ENCODE measurements at regions of chr11 and their contacts with region 1.

Region 1: DNA sequence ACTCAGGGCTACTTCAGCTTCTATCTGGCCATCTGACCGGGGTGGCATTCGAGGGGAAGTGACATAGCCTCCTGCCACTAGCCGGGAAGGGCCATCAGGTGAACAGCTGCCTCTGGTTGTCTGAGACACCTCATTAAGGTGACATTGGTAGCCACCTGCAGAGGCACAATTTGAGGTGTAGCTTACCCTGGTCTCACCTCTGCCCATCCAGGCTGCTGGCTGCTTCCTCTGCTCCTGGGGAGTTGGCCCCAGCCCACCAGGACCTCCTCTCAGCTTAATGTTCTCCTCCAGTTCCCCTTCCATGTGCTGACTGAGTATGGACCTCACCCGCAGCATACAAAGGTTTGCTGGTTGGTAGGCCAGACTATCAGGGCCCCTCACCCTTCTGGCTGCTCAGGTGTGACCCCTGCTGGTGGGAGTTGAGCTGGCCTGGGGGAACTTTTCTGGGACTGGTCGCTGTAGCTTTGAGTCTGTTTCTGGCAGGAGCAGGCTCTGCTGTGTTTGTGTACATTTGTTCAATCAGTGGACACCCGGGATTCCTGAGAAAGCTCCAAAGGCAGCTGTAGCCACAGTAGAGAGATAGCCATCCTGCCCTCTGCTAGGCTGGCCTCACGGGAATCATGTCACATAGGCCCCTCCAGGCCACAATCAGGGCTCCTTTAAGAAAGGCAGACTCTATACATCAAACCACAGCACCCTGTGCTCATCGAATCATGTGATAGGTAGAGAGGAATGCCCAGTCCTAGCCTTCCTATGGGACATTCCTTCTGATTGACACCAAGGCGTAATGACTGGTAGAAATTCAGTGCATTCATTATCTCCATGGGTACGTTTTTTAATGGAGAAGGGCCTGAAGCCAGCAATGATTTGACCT is 295.1 kb upstream of the PLET1 start:
- DNase-seq: peak; percentile 68 to 84
- H3K4me3 ChIP-seq: no peak overlapping the region
- H3K4me3 Mint-ChIP-seq: no peak overlapping the region
- H3K27ac Mint-ChIP-seq: no peak overlapping the region
- H3K4me1 ChIP-seq: no peaks in the 10 kb centered on the region
- H3K4me1 Mint-ChIP-seq: no peaks in the 10 kb centered on the region
- H3K27me3 ChIP-seq: no peaks in the 10 kb centered on the region
- H3K27me3 Mint-ChIP-seq: peaks cover 21% of the 10 kb centered on the region
- CTCF ChIP-seq: peak; percentile 86 to 97

Region 2: GRCh38 chr11:111918390-111919258 is 637.1 kb before region 1 on chr11 and contains the start of gene C11orf52:
- CTCF ChIA-PET with region 1: no interaction called
- POLR2A ChIA-PET with region 1: no interaction called
- intact Hi-C with region 1: no loop called
- DNase-seq: peak; percentile 92 to 94
- H3K4me3 ChIP-seq: peak within 1 kb of the TSS; percentile 49
- H3K4me3 Mint-ChIP-seq: peak within 1 kb of the TSS; percentile 79
- H3K27ac Mint-ChIP-seq: peak within 1 kb of the TSS; percentile 94
- H3K4me1 ChIP-seq: peaks cover 12% of the 10 kb centered on the region
- H3K4me1 Mint-ChIP-seq: peaks cover 21% of the 10 kb centered on the region
- H3K27me3 ChIP-seq: no peaks in the 10 kb centered on the region
- H3K27me3 Mint-ChIP-seq: no peaks in the 10 kb centered on the region
- CTCF ChIP-seq: peak; percentile 42 to 48
- total RNA-seq, gene C11orf52: 14.4 and 14.8 TPM in 2 replicates

Region 3: DNA sequence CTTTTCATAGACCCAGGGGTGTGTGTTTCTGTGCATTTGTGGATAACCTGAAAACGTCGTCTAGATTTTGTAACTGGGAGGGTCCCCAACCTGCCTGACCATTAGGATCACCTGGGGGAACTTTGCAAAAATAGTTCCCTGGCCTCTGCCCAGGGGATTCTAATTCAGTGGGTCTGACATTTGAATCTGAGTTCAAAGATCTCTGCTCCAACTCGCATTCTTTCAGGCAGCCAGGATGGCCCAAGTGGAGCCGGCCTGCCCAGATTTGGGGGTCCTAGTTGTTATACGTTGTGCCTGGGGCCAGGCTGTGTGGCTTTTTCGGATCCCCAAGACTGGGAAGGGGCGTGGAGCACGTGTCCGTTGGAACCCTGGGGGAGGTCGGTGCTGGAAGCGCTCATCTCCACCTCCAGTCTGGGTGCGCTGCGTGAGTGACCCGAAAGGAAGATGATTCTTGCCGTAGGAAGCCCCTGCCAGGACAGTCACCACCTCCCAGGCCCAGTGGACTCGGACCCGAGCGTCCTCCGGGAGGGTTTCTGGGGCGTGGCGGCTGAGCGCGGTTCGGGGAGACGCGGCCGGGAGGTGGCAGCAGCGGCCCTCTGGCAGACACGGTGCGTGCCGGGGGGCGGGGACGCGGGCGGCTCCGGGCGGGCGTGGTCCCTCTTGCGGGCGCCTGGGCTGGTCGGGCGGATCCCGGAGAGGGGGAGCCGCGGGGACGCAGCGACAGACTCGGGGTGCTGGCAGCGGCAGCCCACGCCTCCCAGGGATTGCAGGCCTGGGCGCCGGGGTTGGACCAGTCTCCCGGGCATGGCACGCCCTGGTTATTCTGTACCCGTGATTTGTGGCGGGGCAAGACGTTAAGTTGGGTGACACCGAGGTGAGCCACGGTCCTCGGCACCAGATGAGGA is 265.9 kb before region 1 on chr11:
- CTCF ChIA-PET with region 1: interaction called, 5 read pairs
- POLR2A ChIA-PET with region 1: no interaction called
- intact Hi-C with region 1: loop called (anchors 1 kb)
- DNase-seq: peak; percentile 79 to 94
- H3K4me3 ChIP-seq: peak overlapping the region; percentile 47
- H3K4me3 Mint-ChIP-seq: peak overlapping the region; percentile 68
- H3K27ac Mint-ChIP-seq: no peak overlapping the region
- H3K4me1 ChIP-seq: 0 out of 2 replicates have a peak, but pooled peaks cover 3% of the 10 kb centered on the region
- H3K4me1 Mint-ChIP-seq: no peaks in the 10 kb centered on the region
- H3K27me3 ChIP-seq: peaks cover 1% of the 10 kb centered on the region; the same call in 1 of the 2 replicates
- H3K27me3 Mint-ChIP-seq: peaks cover 25% of the 10 kb centered on the region
- CTCF ChIP-seq: peak; percentile 88 to 95

Region 4: DNA sequence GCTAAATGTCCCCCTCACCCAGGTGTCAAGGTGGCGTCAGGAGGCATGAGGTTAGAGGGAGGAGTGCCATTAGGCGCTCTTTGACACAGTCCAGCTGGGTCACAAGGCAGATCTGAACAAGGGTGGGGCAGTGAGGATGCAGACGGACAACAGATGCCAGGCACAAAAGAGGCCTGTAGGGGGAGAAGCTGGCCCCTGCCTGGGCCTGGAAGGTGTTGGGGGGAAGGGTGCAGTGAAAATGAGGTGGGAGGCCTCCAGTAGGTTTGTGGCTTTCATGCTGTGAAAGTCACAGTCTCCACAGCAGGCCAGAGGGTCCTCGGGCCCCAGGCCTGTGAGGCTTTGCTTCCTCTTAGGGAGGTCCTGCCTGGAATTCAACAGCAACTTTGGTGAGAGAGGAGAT is 210.0 kb before region 1 on chr11:
- CTCF ChIA-PET with region 1: interaction called, 5 read pairs
- POLR2A ChIA-PET with region 1: no interaction called
- intact Hi-C with region 1: loop called (anchors 10 kb)
- DNase-seq: peak; percentile 20 to 45
- H3K4me3 ChIP-seq: no peak overlapping the region
- H3K4me3 Mint-ChIP-seq: no peak overlapping the region
- H3K27ac Mint-ChIP-seq: no peak overlapping the region
- H3K4me1 ChIP-seq: no peaks in the 10 kb centered on the region
- H3K4me1 Mint-ChIP-seq: no peaks in the 10 kb centered on the region
- H3K27me3 ChIP-seq: no peaks in the 10 kb centered on the region
- H3K27me3 Mint-ChIP-seq: peaks cover 7% of the 10 kb centered on the region
- CTCF ChIP-seq: peak; percentile 44 to 46

Region 5: GRCh38 chr11:112364962-112365481 is 190.7 kb before region 1 on chr11:
- CTCF ChIA-PET with region 1: no interaction called
- POLR2A ChIA-PET with region 1: no interaction called
- intact Hi-C with region 1: no loop called
- DNase-seq: no peak
- H3K4me3 ChIP-seq: no peak overlapping the region
- H3K4me3 Mint-ChIP-seq: no peak overlapping the region
- H3K27ac Mint-ChIP-seq: no peak overlapping the region
- H3K4me1 ChIP-seq: no peaks in the 10 kb centered on the region
- H3K4me1 Mint-ChIP-seq: no peaks in the 10 kb centered on the region
- H3K27me3 ChIP-seq: no peaks in the 10 kb centered on the region
- H3K27me3 Mint-ChIP-seq: peaks cover 11% of the 10 kb centered on the region
- CTCF ChIP-seq: no peak

Region 6: DNA sequence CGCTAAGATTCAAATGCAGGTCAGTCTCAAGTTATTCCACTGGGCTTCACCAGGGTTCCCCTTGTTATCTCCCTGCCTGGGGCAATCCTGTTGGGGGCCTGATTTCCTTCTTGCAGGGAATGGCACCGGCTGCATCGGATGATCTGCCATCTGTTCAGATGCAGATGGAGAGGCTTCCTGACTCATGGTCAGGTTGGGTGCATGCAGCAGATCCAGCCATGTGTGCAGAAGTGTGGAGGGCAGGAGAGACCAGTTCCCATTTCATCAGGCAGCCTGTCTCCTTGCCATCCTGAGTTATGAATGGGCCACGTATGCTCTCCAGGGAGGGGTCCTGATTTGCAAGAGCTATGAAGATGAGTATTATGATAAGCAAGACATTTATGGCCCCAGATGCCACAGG is 133.8 kb before region 1 on chr11:
- CTCF ChIA-PET with region 1: no interaction called
- POLR2A ChIA-PET with region 1: no interaction called
- intact Hi-C with region 1: no loop called
- DNase-seq: no peak
- H3K4me3 ChIP-seq: no peak overlapping the region
- H3K4me3 Mint-ChIP-seq: no peak overlapping the region
- H3K27ac Mint-ChIP-seq: no peak overlapping the region
- H3K4me1 ChIP-seq: no peaks in the 10 kb centered on the region
- H3K4me1 Mint-ChIP-seq: no peaks in the 10 kb centered on the region
- H3K27me3 ChIP-seq: no peaks in the 10 kb centered on the region; the same call in none of the 2 replicates
- H3K27me3 Mint-ChIP-seq: peaks cover 10% of the 10 kb centered on the region
- CTCF ChIP-seq: no peak

Region 7: GRCh38 chr11:112440518-112440917 is 115.2 kb before region 1 on chr11:
- CTCF ChIA-PET with region 1: interaction called, 25 read pairs
- POLR2A ChIA-PET with region 1: no interaction called
- intact Hi-C with region 1: loop called (anchors 1 kb)
- DNase-seq: peak in 1 of 2 experiments; percentile 38
- H3K4me3 ChIP-seq: no peak overlapping the region
- H3K4me3 Mint-ChIP-seq: no peak overlapping the region
- H3K27ac Mint-ChIP-seq: no peak overlapping the region
- H3K4me1 ChIP-seq: no peaks in the 10 kb centered on the region
- H3K4me1 Mint-ChIP-seq: no peaks in the 10 kb centered on the region
- H3K27me3 ChIP-seq: no peaks in the 10 kb centered on the region
- H3K27me3 Mint-ChIP-seq: peaks cover 25% of the 10 kb centered on the region
- CTCF ChIP-seq: peak; percentile 49 to 83

Measured in Caco-2 (cell line).